ENCODE measurements at regions of chr4 and their contacts with region 1.

Region 1: GRCh38 chr4:186318481-186318880 is 52.5 kb downstream of the F11 start:
- DNase-seq: no peak
- H3K4me3 ChIP-seq: no peak overlapping the region
- H3K27ac ChIP-seq: no peak overlapping the region
- H3K4me1 ChIP-seq: no peaks in the 10 kb centered on the region
- H3K27me3 ChIP-seq: peaks cover 39% of the 10 kb centered on the region; the same call in 1 of the 2 replicates
- CTCF ChIP-seq: no peak

Region 2: DNA sequence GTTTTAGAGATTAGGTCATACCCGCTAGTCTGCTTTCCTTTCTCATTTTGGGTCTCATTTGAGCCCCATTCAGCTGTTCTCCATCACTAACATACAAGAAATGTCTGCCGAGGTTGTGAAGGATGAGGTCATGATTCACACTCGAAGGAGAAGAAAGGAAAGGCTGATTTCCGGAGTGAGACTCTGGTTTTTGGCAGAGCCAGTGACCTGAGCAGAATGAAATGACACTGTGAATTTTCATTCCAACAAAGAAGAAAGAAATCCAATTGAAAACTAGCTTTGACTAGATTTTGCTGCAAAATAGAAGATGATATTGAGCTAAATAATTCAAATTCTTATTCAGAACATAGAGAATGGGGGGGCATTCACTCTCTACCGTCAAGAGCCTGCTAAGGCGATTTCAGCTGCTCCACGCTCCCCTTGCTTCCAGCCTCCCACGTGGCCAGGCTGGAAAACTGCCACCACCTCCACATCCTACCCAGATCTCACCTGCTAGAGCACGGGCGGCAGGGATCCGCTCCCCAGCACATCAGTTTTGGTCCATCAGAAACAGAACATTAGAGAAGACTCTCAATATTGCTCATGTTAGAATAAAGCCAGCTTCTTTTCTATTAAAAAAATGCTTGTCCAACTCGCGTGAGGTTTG is 13.5 kb before region 1 on chr4:
- CTCF ChIA-PET with region 1: no interaction called
- POLR2A ChIA-PET with region 1: interaction called, 10 read pairs
- intact Hi-C with region 1: no loop called
- DNase-seq: no peak
- H3K4me3 ChIP-seq: no peak overlapping the region
- H3K27ac ChIP-seq: no peak overlapping the region
- H3K4me1 ChIP-seq: no peaks in the 10 kb centered on the region
- H3K27me3 ChIP-seq: peaks cover 32% of the 10 kb centered on the region
- CTCF ChIP-seq: no peak

Region 3: DNA sequence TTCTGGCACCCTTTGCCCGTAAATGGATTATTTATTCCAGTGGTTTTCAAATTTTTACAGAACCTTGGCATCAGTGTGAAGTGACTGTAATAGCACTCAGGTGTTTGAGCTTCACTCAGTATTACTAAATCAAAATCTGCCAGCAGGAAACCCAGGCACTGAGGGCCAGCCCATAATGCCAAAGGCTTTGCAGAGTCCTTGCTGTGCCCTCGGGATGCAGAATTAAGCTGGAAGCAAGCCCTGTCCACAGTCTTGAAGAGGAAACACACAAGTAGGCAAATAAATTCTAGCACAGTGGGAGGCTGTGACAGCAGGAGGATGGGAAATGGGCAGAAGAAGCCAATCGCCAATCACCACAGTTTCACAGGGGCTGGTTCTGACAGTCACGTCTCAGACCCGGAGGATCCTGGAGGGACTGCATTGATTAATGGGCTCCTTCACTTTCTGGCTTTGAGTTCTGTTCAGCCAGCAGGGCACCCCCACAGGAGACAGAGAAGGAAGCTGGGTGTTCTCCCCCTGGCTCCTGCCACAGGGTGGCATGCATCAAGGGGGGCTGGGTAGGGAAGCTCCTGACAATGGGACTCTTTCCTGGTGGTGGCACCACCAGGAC is 98.1 kb after region 1 on chr4:
- CTCF ChIA-PET with region 1: no interaction called
- POLR2A ChIA-PET with region 1: no interaction called
- intact Hi-C with region 1: no loop called
- DNase-seq: no peak
- H3K4me3 ChIP-seq: no peak overlapping the region
- H3K27ac ChIP-seq: no peak overlapping the region
- H3K4me1 ChIP-seq: no peaks in the 10 kb centered on the region
- H3K27me3 ChIP-seq: peaks cover 81% of the 10 kb centered on the region
- CTCF ChIP-seq: no peak

Measured in PC-9 (cell line).